Right lobe of liver (tissue), 6 donors: ENCODE measurements at regions of chr15 and their contacts with region 1.

Region 1: GRCh38 chr15:80173022-80173759 is 20.4 kb downstream of the FAH start:
- DNase-seq: peak; percentile 80 to 93 (median 90)
- ATAC-seq: peak; percentile 63 to 78 (median 70)
- H3K4me3 ChIP-seq: no peak overlapping the region
- H3K27ac ChIP-seq: peak overlapping the region in 2 of 3 donors; percentile 52 to 58
- H3K4me1 ChIP-seq: peaks cover 0 to 73% (median 36%) of the 10 kb centered on the region in 4 donors
- H3K27me3 ChIP-seq: no peaks in the 10 kb centered on the region
- CTCF ChIP-seq: peak; percentile 75 to 88 (median 82)
- POLR2A ChIP-seq: no peak

Region 2: GRCh38 chr15:80059786-80060355 is 113.3 kb before region 1 on chr15:
- intact Hi-C with region 1: loop called (anchors 10 kb)
- DNase-seq: no peak
- ATAC-seq: peak; percentile 58 to 77 (median 66)
- H3K4me3 ChIP-seq: peak overlapping the region; percentile 66 to 83 (median 74)
- H3K27ac ChIP-seq: peak overlapping the region; percentile 85 to 94 (median 86)
- H3K4me1 ChIP-seq: peaks cover 0 to 25% (median 4%) of the 10 kb centered on the region in 4 donors
- H3K27me3 ChIP-seq: no peaks in the 10 kb centered on the region
- CTCF ChIP-seq: no peak
- POLR2A ChIP-seq: no peak